CD14-positive monocyte (primary cell): ENCODE measurements at regions of chr2 and their contacts with region 1.

Region 1: GRCh38 chr2:237691908-237692600 is 64.7 kb downstream of the LRRFIP1 start:
- DNase-seq: peak; percentile 88 to 93 (median 92)
- H3K4me3 ChIP-seq: peak overlapping the region; percentile 93 to 100 (median 95)
- H3K4me3 Mint-ChIP-seq: peak overlapping the region; percentile 100
- H3K27ac ChIP-seq: peak overlapping the region; percentile 94 to 100
- H3K27ac Mint-ChIP-seq: peak overlapping the region; percentile 96 to 100 (median 99)
- H3K4me1 ChIP-seq: peaks cover 63 to 79% of the 10 kb centered on the region in 2 donors
- H3K4me1 Mint-ChIP-seq: peaks cover 67% of the 10 kb centered on the region
- H3K27me3 ChIP-seq: no peaks in the 10 kb centered on the region
- H3K27me3 Mint-ChIP-seq: peaks cover 0 to 3% (median 0%) of the 10 kb centered on the region in 3 donors
- CTCF ChIP-seq: no peak

Region 2: GRCh38 chr2:237726401-237726830 is 34.4 kb after region 1 on chr2:
- intact Hi-C with region 1: loop called in 1 of 2 experiments (anchors 5 kb)
- DNase-seq: peak in 1 of 3 donors; percentile 49
- H3K4me3 ChIP-seq: peak overlapping the region in 1 of 3 experiments; percentile 1
- H3K4me3 Mint-ChIP-seq: no peak overlapping the region
- H3K27ac ChIP-seq: peak overlapping the region; percentile 14 to 72
- H3K27ac Mint-ChIP-seq: peak overlapping the region; percentile 78 to 94 (median 92)
- H3K4me1 ChIP-seq: peaks cover 34 to 62% of the 10 kb centered on the region in 2 donors
- H3K4me1 Mint-ChIP-seq: peaks cover 70% of the 10 kb centered on the region
- H3K27me3 ChIP-seq: no peaks in the 10 kb centered on the region
- H3K27me3 Mint-ChIP-seq: peaks cover 0 to 2% (median 1%) of the 10 kb centered on the region in 3 donors
- CTCF ChIP-seq: no peak

Region 3: GRCh38 chr2:238220892-238221521 is 529.0 kb after region 1 on chr2:
- intact Hi-C with region 1: no loop called
- DNase-seq: no peak
- H3K4me3 ChIP-seq: peak overlapping the region in 1 of 3 experiments; percentile 8
- H3K4me3 Mint-ChIP-seq: peak overlapping the region; percentile 11 to 59
- H3K27ac ChIP-seq: no peak overlapping the region
- H3K27ac Mint-ChIP-seq: peak overlapping the region in 1 of 7 donors; percentile 40
- H3K4me1 ChIP-seq: no peaks in the 10 kb centered on the region
- H3K4me1 Mint-ChIP-seq: no peaks in the 10 kb centered on the region
- H3K27me3 ChIP-seq: no peaks in the 10 kb centered on the region
- H3K27me3 Mint-ChIP-seq: peaks cover 3 to 10% (median 5%) of the 10 kb centered on the region in 3 donors
- CTCF ChIP-seq: no peak